ENCODE measurements at regions of chr2 and their contacts with region 1.

Region 1: DNA sequence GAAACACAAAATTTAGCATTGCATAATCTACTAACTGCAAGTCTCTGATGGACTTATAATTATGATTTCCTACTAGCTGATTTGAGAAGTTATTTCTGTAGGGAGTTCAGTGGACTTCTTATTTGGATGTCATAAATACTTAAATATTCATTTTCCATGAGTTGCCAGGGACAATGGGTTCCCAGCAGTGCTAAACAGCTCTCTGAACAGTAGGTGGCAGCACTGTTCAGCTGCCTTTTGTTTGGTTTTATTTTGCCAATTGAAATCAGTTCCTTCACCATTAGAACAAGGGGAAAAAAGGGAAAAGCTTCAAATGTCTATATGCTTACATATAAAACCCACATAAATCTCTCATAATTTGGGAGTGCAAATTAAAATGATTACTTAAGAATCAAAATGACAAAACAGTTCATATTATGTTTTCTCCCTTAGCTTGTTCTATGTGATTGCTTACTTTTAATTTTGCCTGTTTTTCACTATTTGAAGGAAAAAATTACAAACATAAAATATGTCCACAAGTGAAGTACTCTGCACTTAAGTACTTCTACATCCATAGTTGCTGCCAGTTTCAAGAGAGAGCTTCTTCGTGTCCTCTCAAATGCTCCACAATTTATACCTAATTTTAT is 898.9 kb downstream of the CPS1 start:
- DNase-seq: peak; percentile 61
- H3K4me3 Mint-ChIP-seq: no peak overlapping the region
- H3K27ac Mint-ChIP-seq: no peak overlapping the region
- H3K4me1 Mint-ChIP-seq: no peaks in the 10 kb centered on the region
- H3K27me3 Mint-ChIP-seq: no peaks in the 10 kb centered on the region
- CTCF ChIP-seq: no peak

Region 2: DNA sequence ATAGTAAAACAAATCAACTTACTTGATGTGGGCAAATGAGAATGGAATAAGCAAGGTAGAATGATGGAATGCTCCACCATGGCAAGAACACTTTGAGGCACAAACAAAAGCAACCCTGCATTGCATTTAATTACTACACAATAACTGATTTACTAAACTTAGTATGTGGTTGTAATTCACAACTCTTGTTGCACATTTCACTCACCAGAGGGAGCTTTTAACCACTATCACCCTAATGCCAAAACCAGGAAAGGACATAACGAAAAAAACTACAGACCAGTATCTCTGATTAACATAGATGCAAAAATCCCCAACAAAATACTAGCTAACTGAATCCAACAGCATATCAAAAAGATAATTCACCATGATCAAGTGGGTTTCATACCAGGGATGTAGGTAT is 239.1 kb before region 1 on chr2:
- CTCF ChIA-PET with region 1: no interaction called
- intact Hi-C with region 1: loop called (anchors 5 kb)
- DNase-seq: peak; percentile 6
- H3K4me3 Mint-ChIP-seq: no peak overlapping the region
- H3K27ac Mint-ChIP-seq: no peak overlapping the region
- H3K4me1 Mint-ChIP-seq: no peaks in the 10 kb centered on the region
- H3K27me3 Mint-ChIP-seq: no peaks in the 10 kb centered on the region
- CTCF ChIP-seq: peak; percentile 25

Measured in Calu3 (cell line).